Spleen (tissue), 13 donors: ENCODE measurements at regions of chr2 and their contacts with region 1.

Region 1: GRCh38 chr2:19347619-19348562 is 10.5 kb downstream of the OSR1 start:
- DNase-seq: peak; percentile 97
- H3K4me3 ChIP-seq: peak overlapping the region; percentile 44 to 85 (median 64)
- H3K27ac ChIP-seq: peak overlapping the region; percentile 87 to 96 (median 94)
- H3K4me1 ChIP-seq: peaks cover 14 to 44% (median 37%) of the 10 kb centered on the region in 6 donors
- H3K27me3 ChIP-seq: peaks cover 13 to 45% (median 37%) of the 10 kb centered on the region in 7 donors
- CTCF ChIP-seq: peak in 2 of 11 experiments; percentile 11 to 18
- POLR2A ChIP-seq: peak in 2 of 3 donors; percentile 83 to 91

Region 2: GRCh38 chr2:18560031-18560796 is 787.7 kb before region 1 on chr2 and contains the start of gene RDH14:
- intact Hi-C with region 1: loop called (anchors 5 kb)
- DNase-seq: peak; percentile 97
- H3K4me3 ChIP-seq: peak within 1 kb of the TSS; percentile 67 to 93 (median 86)
- H3K27ac ChIP-seq: peak within 1 kb of the TSS; percentile 94 to 99 (median 98)
- H3K4me1 ChIP-seq: peaks cover 11 to 47% (median 38%) of the 10 kb centered on the region in 6 donors
- H3K27me3 ChIP-seq: no peaks in the 10 kb centered on the region
- CTCF ChIP-seq: peak in 2 of 11 experiments; percentile 13
- POLR2A ChIP-seq: peak in 2 of 3 donors; percentile 13 to 23
- total RNA-seq, gene RDH14: 14.2 to 26.0 (median 21.8) TPM

Region 3: GRCh38 chr2:19140596-19141219 is 207.2 kb before region 1 on chr2:
- intact Hi-C with region 1: no loop called
- DNase-seq: no peak
- H3K4me3 ChIP-seq: no peak overlapping the region
- H3K27ac ChIP-seq: no peak overlapping the region
- H3K4me1 ChIP-seq: no peaks in the 10 kb centered on the region
- H3K27me3 ChIP-seq: no peaks in the 10 kb centered on the region
- CTCF ChIP-seq: no peak
- POLR2A ChIP-seq: no peak

Region 4: DNA sequence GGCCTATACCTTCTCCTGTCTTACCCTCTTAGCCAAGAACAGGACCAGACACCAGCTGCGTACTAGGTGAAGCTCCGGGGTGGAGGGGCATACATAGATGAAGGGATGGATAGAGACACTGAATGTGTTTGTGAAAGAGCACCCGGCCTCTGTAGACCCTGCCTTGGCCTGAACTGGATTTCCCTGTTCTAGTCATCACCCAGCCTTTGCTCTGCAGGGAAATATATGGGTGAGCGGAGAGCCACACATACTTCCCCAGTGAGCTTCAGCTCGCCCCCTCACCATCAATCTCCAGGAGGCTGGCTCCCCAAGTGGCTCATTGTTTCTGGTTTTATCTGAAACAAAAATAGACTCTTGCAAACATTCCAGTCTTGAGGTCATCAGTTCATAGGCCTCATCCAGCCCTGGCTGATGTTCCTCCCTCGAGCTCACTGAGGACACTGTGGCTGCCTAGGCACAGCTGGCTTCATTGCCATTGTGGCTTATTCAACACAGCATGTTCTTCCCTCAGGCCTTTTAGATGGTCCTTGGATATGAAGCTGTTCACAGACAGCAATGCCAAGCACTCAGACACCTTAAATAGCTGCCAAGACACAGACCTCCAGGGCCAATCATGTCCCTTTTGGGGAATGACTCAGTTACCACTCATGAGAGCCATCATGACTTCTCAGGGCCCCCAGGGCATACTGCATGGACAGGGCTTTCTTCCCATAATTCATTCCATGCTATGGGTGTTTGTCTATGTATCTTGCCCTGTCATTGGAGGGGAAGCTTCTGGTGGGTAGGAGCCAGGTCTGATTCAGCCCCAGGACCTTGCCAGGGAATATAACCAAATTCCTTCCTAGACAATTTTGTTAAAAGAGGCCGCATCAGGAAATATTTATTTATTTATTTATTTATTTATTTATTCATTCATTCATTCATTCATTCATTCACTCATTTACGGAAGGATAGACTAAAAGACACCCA is 471.5 kb after region 1 on chr2:
- intact Hi-C with region 1: no loop called
- DNase-seq: no peak
- H3K4me3 ChIP-seq: no peak overlapping the region
- H3K27ac ChIP-seq: no peak overlapping the region
- H3K4me1 ChIP-seq: no peaks in the 10 kb centered on the region
- H3K27me3 ChIP-seq: peaks cover 0 to 12% (median 0%) of the 10 kb centered on the region in 7 donors
- CTCF ChIP-seq: no peak
- POLR2A ChIP-seq: no peak